Activated naive CD4-positive, alpha-beta T cell treated with anti-CD3 and anti-CD28 coated beads for 36 hours (primary cell): ENCODE measurements at regions of chr7 and their contacts with region 1.

Region 1: DNA sequence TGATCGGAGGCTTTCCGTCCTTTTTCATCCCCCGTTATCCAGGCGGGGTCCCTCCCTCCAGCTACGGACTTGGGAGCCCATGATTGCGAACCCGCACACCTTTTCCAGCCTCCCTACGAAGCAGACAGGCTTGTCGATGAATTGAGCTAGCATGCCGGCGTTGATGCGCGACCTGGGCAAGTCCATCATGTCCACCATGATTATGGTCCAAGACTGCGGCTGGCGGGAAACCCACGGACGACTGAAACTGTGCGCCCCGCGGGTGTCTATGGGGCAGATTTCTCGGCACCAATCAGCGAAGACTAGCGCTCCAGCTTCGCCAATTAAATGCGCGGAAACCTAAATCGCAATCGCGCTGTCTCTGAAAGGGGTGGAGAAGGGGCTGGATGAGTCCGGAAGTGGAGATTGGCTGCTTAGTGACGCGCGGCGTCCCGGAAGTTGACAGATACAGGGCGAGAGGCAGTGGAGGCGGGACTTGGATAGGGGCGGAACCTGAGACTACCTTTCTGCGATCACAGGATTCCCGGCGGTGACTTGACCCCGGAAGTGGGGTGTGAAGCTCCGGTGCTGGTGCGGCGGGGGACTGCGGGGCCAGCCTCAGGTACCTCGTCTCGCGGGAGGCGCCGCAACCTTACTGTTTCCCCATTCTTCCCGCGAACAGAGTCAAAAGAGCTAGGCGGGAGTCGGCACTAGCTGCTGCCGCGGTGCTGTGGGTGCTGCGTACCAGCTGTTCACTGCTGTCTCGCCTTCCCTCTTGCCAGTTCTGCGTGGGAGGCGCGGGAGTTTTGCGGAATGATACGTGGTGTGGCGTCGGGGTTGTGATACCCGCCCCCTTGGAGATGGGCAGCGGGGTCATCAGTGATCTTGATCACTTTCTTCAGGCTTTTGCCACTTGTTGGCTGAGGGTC is at the start of gene UMAD1:
- DNase-seq: peak; percentile 99
- H3K4me3 Mint-ChIP-seq: peak within 1 kb of the TSS; percentile 92
- H3K27ac Mint-ChIP-seq: peak within 1 kb of the TSS; percentile 98
- H3K4me1 Mint-ChIP-seq: peaks cover 41% of the 10 kb centered on the region
- H3K27me3 Mint-ChIP-seq: no peaks in the 10 kb centered on the region
- total RNA-seq, gene UMAD1: 13.8 to 14.3 TPM

Region 2: GRCh38 chr7:5773661-5774086 is 1866.8 kb before region 1 on chr7:
- CTCF ChIA-PET with region 1: no interaction called
- intact Hi-C with region 1: loop called (anchors 10 kb)
- DNase-seq: peak; percentile 79
- H3K4me3 Mint-ChIP-seq: no peak overlapping the region
- H3K27ac Mint-ChIP-seq: peak overlapping the region; percentile 80
- H3K4me1 Mint-ChIP-seq: peaks cover 65% of the 10 kb centered on the region
- H3K27me3 Mint-ChIP-seq: no peaks in the 10 kb centered on the region

Region 3: GRCh38 chr7:7566651-7567611 is 73.5 kb before region 1 on chr7 and contains the start of gene MIOS:
- CTCF ChIA-PET with region 1: no interaction called
- intact Hi-C with region 1: loop called (anchors 1 kb)
- DNase-seq: peak; percentile 76
- H3K4me3 Mint-ChIP-seq: peak within 1 kb of the TSS; percentile 80
- H3K27ac Mint-ChIP-seq: peak within 1 kb of the TSS; percentile 63
- H3K4me1 Mint-ChIP-seq: peaks cover 30% of the 10 kb centered on the region
- H3K27me3 Mint-ChIP-seq: no peaks in the 10 kb centered on the region
- total RNA-seq, gene MIOS: 40.6 to 43.0 TPM

Region 4: GRCh38 chr7:7653593-7654187 is 13.2 kb after region 1 on chr7:
- CTCF ChIA-PET with region 1: interaction called, 4 read pairs
- intact Hi-C with region 1: loop called (anchors 1 kb)
- DNase-seq: peak; percentile 49
- H3K4me3 Mint-ChIP-seq: no peak overlapping the region
- H3K27ac Mint-ChIP-seq: no peak overlapping the region
- H3K4me1 Mint-ChIP-seq: peaks cover 37% of the 10 kb centered on the region
- H3K27me3 Mint-ChIP-seq: no peaks in the 10 kb centered on the region

Region 5: DNA sequence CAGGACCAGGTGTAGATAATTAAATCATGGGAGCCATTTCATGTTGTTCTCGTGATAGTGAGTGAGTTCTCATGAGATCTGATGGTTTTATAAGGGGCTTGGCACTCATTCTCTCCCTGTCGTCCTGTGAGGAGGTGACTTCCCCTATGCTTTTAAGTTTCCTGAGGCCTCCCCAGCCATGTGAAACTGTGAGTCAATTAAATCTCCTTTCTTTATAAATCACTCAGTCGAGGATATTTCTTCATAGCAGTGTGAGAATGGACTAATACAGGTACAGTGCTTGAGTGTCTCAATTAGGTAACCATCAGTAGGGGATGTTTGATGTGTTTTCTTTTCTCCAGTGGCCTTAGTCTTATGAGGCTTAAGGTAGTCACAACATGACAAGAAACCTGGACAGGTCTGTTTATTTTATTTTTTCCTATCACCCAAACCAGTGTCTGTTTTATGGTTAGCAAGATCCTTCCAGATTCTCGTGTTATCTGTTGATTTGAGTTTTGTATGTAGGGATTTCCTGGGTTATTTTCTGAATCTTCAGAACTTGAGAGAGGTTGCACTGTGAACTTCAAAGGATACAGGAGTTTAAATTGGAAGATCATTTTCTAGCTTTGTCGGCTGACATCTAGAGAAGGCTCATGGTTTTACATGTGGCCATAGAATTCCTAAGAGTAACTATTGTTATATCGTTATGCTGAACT is 32.2 kb after region 1 on chr7:
- CTCF ChIA-PET with region 1: interaction called, 4 read pairs
- intact Hi-C with region 1: loop called (anchors 1 kb)
- DNase-seq: peak; percentile 64
- H3K4me3 Mint-ChIP-seq: peak overlapping the region; percentile 31
- H3K27ac Mint-ChIP-seq: peak overlapping the region; percentile 79
- H3K4me1 Mint-ChIP-seq: peaks cover 45% of the 10 kb centered on the region
- H3K27me3 Mint-ChIP-seq: no peaks in the 10 kb centered on the region

Region 6: GRCh38 chr7:7707806-7708205 is 67.3 kb after region 1 on chr7:
- CTCF ChIA-PET with region 1: no interaction called
- intact Hi-C with region 1: no loop called
- DNase-seq: no peak
- H3K4me3 Mint-ChIP-seq: no peak overlapping the region
- H3K27ac Mint-ChIP-seq: no peak overlapping the region
- H3K4me1 Mint-ChIP-seq: peaks cover 22% of the 10 kb centered on the region
- H3K27me3 Mint-ChIP-seq: no peaks in the 10 kb centered on the region

Region 7: GRCh38 chr7:7944619-7945282 is 304.3 kb after region 1 on chr7:
- CTCF ChIA-PET with region 1: no interaction called
- intact Hi-C with region 1: loop called (anchors 1 kb)
- DNase-seq: peak; percentile 75
- H3K4me3 Mint-ChIP-seq: peak overlapping the region; percentile 41
- H3K27ac Mint-ChIP-seq: peak overlapping the region; percentile 18
- H3K4me1 Mint-ChIP-seq: peaks cover 16% of the 10 kb centered on the region
- H3K27me3 Mint-ChIP-seq: no peaks in the 10 kb centered on the region

Region 8: DNA sequence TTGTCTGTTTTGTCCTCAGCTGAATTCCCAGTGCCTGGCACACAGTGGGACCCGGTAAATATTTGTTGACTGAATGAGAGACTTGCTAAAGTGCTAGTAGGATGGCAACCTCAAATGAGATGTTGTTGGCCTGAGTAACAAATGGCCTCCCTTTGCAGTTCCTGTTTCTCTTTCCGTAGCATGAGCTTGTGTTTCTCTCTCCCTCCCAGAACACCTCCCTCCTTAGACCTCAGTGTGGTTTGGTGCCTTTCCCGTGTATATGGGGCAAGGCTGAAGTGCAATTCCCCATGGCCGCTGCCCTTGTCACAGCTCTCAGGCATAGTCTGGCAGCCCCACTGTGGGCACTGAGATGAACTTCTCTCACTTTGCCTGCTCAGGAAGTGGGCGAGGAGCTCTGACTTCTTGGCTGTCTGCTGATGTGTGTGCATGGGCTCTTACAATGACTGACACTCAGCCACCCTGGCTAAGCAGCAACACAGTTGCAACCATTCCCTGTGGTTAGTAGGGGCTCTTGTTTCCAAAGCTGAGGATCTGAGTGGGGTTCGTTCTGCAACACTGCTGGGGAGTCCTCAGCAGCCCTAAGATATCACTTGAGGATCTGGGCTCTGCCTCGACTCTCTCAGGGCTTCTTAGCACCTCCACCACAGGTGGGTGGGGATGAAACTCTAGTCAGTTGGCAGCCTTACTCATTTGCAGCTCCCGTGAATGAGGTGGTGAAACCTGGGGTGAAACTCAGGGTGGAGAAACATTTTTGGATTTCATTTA is 485.4 kb after region 1 on chr7:
- CTCF ChIA-PET with region 1: interaction called, 4 read pairs
- intact Hi-C with region 1: loop called (anchors 1 kb)
- DNase-seq: peak; percentile 86
- H3K4me3 Mint-ChIP-seq: peak overlapping the region; percentile 71
- H3K27ac Mint-ChIP-seq: peak overlapping the region; percentile 96
- H3K4me1 Mint-ChIP-seq: peaks cover 57% of the 10 kb centered on the region
- H3K27me3 Mint-ChIP-seq: no peaks in the 10 kb centered on the region